ENCODE measurements at regions of chr6 and their contacts with region 1.

Region 1: DNA sequence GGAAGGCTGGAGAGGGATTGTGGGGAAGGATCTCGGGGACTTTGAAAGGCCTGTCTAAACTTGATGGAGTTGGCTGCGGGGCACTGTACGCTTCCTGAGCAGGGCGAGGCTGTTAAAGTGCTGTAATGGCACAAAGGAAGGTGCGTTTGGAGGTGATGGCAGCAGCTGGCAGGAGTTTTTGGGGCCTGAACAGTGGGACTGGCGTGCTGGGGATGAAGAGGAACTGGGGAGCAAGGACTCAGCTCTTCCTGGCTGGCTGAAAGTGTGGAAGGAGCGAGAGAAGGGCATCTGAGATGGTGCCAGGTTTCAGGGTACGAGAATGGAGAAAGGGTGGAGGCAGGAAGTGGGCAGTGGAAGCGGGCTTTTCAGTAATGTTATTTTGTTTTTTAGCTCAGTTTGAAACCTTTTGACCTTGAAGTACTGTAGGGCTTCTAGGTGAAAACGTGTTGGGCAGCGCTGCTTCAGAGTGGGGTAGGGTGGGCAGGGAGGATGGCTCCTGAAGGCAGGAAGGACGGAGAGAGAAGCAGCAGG is 8.0 kb downstream of the TMEM181 start:
- DNase-seq: no peak
- H3K4me3 ChIP-seq: no peak overlapping the region
- H3K27ac ChIP-seq: no peak overlapping the region
- H3K4me1 ChIP-seq: peaks cover 0 to 6% (median 4%) of the 10 kb centered on the region in 4 experiments; a peak in 4 of 7 replicates
- H3K27me3 ChIP-seq: no peaks in the 10 kb centered on the region
- CTCF ChIP-seq: no peak
- EP300 ChIP-seq: no peak
- POLR2A ChIP-seq: no peak
- RAD21 ChIP-seq: no peak

Region 2: DNA sequence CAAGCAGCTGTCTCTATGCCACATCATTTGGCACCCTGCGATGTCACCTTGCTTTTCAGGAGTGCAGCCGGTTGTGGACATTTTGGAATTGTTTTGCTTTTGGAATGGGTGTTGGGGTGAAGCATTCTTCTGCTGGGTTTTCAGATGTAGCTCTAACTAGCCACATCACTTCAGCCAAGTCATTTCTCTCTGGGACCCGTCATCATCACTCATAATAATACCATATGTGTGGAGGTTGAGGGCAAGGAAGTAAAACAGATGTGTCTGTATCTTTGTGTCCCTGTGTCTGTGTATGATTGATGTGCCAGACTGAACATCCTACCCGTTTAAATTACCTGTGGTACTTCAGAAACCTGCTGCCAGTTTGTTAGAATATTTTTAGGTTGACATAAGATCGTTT is 305.2 kb before region 1 on chr6:
- CTCF ChIA-PET with region 1: no interaction called
- POLR2A ChIA-PET with region 1: no interaction called
- DNase-seq: no peak
- H3K4me3 ChIP-seq: no peak overlapping the region
- H3K27ac ChIP-seq: no peak overlapping the region
- H3K4me1 ChIP-seq: no peaks in the 10 kb centered on the region
- H3K27me3 ChIP-seq: no peaks in the 10 kb centered on the region
- CTCF ChIP-seq: no peak
- EP300 ChIP-seq: no peak
- POLR2A ChIP-seq: no peak
- RAD21 ChIP-seq: no peak

Region 3: DNA sequence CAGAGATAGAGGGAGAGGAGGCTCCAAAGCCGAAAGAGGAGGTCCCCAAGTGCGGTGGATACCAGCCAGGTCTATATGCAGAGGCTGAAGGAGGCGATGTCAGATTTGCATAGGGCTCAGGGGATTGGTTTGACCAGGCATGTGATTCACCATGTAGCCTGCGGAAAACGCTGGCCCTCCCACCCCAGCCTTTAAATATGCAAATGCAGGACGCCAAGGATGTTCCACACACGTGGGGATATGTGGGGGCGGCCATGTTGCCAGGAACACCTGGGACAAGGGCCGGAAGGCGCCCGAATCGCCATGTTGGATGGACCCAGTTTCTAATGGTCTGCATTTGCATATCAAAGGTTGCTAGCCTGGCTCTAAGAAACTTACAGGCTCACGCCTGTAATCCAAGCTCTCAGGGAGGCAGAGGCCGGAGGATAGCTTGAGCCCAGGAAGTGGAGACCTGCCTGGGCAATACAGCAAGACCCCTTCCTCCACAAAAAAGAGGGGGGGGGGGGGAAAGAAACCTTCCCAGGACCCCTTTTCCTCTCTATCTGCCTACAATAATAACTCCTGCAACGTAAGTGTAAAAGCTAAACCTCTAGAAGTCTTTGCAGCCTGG is 145.2 kb before region 1 on chr6:
- CTCF ChIA-PET with region 1: no interaction called
- POLR2A ChIA-PET with region 1: no interaction called
- DNase-seq: no peak
- H3K4me3 ChIP-seq: no peak overlapping the region
- H3K27ac ChIP-seq: no peak overlapping the region
- H3K4me1 ChIP-seq: no peaks in the 10 kb centered on the region
- H3K27me3 ChIP-seq: no peaks in the 10 kb centered on the region
- CTCF ChIP-seq: no peak
- EP300 ChIP-seq: no peak
- POLR2A ChIP-seq: no peak
- RAD21 ChIP-seq: no peak

Region 4: GRCh38 chr6:158554611-158555361 is 13.2 kb before region 1 on chr6:
- CTCF ChIA-PET with region 1: interaction called, 12 read pairs
- POLR2A ChIA-PET with region 1: interaction called, 4 read pairs
- DNase-seq: no peak
- H3K4me3 ChIP-seq: no peak overlapping the region
- H3K27ac ChIP-seq: no peak overlapping the region
- H3K4me1 ChIP-seq: no peaks in the 10 kb centered on the region
- H3K27me3 ChIP-seq: no peaks in the 10 kb centered on the region
- CTCF ChIP-seq: no peak
- EP300 ChIP-seq: no peak
- POLR2A ChIP-seq: no peak
- RAD21 ChIP-seq: no peak

Measured in H1 (cell line).